Pancreas (tissue), 10 donors: ENCODE measurements at regions of chr2 and their contacts with region 1.

Region 1: DNA sequence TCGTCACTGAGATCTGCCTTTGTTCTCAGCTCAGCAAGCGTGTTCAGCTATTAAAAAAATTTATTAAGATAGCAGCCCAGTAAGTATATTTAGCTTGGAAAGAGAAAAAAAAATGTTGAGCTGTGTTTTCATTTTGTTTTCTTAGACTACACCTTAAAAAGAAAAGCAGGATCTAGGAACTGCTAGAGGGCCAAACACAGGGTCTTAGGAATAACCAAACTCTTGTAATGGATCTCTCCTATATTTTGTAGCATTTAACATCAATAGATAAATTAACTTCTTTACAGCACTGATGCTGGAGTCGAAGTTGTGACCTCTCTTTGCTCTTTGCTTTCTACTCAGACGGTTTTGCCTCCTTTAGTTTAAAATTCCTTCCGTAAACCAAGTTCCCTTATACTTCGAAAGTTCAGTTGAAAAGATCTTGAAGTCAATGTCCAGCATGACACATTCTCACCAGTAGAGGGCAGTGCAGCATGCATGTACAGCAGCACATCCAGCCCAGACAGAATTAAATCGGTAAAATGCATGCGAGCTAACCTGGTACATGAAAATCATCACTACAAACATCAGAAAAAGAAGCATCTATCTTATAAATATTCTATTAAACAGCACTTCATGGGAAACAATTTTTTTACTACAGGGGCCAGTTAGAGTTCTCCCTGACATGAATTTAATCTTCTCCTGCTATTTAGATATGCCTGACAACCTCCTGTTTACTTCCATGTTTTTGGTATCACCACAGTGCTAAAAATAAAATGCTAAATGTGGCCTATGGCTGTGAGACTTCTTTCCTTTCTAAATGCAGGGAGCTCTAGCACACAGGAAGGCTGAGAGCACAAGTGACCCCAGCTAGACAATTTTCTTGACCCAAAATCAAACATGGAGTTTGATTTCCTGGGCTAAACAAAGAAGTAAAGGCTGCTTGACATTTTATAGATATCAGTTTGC is 48.2 kb upstream of the MAP3K20 start:
- DNase-seq: peak in 5 of 6 donors; percentile 65 to 84 (median 73)
- ATAC-seq: peak; percentile 85 to 99 (median 95)
- H3K4me3 ChIP-seq: no peak overlapping the region
- H3K27ac ChIP-seq: no peak overlapping the region
- H3K4me1 ChIP-seq: peaks cover 4 to 14% (median 8%) of the 10 kb centered on the region in 3 donors
- H3K27me3 ChIP-seq: no peaks in the 10 kb centered on the region
- CTCF ChIP-seq: peak; percentile 81 to 98 (median 92)

Region 2: DNA sequence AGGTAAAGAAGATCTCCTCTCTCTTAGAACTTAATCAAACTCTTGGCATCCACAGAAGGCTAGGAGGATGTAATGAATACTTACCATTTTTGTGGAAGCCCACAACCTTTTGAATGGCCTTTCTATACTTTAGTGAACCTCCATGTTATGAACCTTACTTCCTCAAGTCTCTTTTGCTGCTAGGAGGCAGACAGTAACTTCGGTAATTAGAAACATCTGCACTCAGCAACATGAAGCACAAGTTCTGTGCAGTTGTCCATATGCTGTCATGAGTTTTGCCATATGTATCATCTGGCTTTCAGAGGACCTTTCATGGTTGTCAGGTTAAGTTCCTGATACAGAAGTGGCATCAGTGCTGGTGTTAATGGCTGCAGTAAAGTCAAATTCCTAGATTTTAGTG is 421.2 kb before region 1 on chr2:
- intact Hi-C with region 1: no loop called
- DNase-seq: no peak
- ATAC-seq: no peak
- H3K4me3 ChIP-seq: no peak overlapping the region
- H3K27ac ChIP-seq: no peak overlapping the region
- H3K4me1 ChIP-seq: no peaks in the 10 kb centered on the region
- H3K27me3 ChIP-seq: no peaks in the 10 kb centered on the region
- CTCF ChIP-seq: no peak

Region 3: DNA sequence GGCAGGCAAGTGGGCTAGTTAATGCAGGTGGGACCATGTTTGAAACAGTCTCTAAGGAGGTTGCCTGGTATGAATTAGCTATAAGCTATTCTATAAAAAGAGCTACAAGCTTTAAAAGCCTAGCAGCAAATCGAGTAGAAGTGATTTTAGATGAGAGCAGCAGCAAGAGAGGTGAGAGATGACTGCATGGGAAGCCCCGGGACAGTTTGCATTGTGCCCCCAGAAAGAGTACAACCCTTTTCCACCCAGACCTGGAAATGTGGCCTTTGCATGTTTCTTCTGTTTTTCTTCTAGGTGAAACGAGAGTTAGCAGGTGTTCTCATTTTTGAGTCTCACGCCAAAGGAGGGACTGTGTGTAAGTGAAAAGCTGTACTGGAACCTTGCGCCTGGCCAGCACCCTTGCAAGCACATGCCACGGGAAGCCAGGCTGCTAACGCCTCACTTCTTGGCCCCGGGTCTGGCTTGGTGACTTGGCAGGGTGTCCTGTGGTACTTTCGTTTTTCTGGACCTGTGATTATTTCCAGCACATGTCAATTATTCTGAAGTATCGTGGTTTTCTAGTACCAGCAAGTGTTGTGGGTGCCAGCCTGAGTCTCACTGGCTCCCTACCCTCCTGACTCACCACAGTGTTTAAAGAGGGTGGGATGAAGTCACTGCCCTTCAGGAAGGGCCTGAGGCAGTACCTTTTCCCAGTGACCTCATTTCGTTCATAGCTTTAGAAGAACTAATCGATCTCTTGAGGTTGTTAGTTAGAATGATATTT is 42.1 kb before region 1 on chr2:
- intact Hi-C with region 1: no loop called
- DNase-seq: peak; percentile 34 to 68 (median 64)
- ATAC-seq: peak; percentile 94 to 97 (median 96)
- H3K4me3 ChIP-seq: peak overlapping the region in 1 of 4 donors; percentile 15
- H3K27ac ChIP-seq: peak overlapping the region in 2 of 4 donors; percentile 46 to 67
- H3K4me1 ChIP-seq: peaks cover 5 to 8% (median 7%) of the 10 kb centered on the region in 3 donors
- H3K27me3 ChIP-seq: no peaks in the 10 kb centered on the region
- CTCF ChIP-seq: no peak

Region 4: GRCh38 chr2:173210270-173211196 is 183.1 kb after region 1 on chr2:
- intact Hi-C with region 1: loop called in 2 of 3 experiments (anchors 5 to 10 kb)
- DNase-seq: peak in 3 of 6 donors; percentile 61 to 71 (median 65)
- ATAC-seq: peak; percentile 96 to 99 (median 99)
- H3K4me3 ChIP-seq: no peak overlapping the region
- H3K27ac ChIP-seq: no peak overlapping the region
- H3K4me1 ChIP-seq: peaks cover 0 to 4% (median 0%) of the 10 kb centered on the region in 3 donors
- H3K27me3 ChIP-seq: no peaks in the 10 kb centered on the region
- CTCF ChIP-seq: peak; percentile 31 to 74 (median 65)

Region 5: DNA sequence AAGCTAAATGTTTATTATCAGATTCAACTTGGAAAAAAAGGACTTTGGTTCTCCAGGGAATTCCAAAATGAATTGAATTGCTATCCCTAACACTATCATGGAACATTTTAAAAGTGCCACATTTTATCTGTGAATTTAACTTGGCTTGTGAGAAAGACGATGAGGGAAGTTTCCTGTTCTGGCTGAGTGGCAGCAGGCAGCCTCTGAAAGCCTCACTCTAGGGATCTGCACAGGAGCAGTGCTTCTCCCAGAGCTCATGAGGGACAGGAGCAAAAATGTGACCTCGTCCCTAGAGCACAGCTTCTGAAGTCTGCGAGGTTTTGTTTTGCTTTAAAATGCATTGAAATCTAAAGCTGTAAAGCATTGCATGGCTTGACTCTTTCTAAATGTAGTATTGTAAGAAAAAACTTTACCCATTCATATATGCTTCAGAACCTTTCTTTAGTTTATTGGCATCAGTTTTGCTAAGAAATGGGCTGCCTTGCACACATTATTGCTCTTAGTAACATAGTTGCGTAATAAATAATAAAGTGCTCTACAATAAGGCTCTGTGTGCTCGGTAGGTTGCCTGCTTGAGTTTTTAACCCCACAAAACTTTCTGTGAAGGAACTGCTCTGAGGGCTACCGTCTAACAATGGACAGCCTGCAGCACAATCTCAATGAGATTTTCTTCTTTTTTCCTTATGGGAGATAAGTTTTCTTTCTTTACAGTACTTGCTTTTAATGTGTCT is 191.0 kb after region 1 on chr2:
- intact Hi-C with region 1: loop called in 2 of 3 experiments (anchors 5 to 10 kb)
- DNase-seq: no peak
- ATAC-seq: peak; percentile 55 to 73 (median 64)
- H3K4me3 ChIP-seq: no peak overlapping the region
- H3K27ac ChIP-seq: peak overlapping the region in 2 of 4 donors; percentile 25 to 30
- H3K4me1 ChIP-seq: peaks cover 7 to 25% (median 10%) of the 10 kb centered on the region in 3 donors
- H3K27me3 ChIP-seq: no peaks in the 10 kb centered on the region
- CTCF ChIP-seq: no peak

Region 6: DNA sequence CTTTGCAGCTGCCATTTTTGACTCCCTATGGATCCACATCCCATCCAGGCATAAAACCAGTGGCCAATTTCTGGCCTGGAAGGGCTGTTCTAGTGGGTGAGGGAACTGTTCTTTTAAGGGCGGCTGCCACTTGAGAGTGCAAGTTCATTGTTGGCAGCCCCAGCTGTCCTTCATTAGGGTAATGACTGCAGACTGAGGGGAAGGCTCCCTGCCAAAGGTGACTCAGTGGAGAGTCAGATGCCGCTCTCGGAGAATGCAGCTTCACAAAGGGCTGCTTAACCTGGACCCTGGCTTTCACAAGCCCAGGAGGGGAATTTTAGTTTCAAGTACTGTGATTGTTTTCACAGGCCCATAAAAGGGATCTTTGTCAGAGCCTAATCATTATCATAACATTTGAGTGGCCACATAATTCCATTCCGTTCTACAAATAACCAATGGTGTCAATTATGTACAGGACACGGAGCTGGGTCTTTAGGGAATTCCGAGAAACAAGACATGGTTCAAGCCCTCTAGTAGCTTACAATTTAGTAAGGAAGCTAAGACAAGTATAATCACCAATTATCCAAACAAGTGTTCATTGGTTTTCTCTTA is 562.9 kb after region 1 on chr2:
- intact Hi-C with region 1: no loop called
- DNase-seq: peak in 4 of 6 donors; percentile 27 to 53 (median 34)
- ATAC-seq: peak; percentile 61 to 92 (median 87)
- H3K4me3 ChIP-seq: no peak overlapping the region
- H3K27ac ChIP-seq: peak overlapping the region in 2 of 4 donors; percentile 11 to 52
- H3K4me1 ChIP-seq: peaks cover 0 to 6% (median 0%) of the 10 kb centered on the region in 3 donors
- H3K27me3 ChIP-seq: no peaks in the 10 kb centered on the region
- CTCF ChIP-seq: no peak